Esophagus muscularis mucosa (tissue), 4 donors: ENCODE measurements at regions of chr22 and their contacts with region 1.

Region 1: GRCh38 chr22:24423519-24424000 is 3.8 kb upstream of the ADORA2A start:
- DNase-seq: no peak
- H3K4me3 ChIP-seq: peak overlapping the region; percentile 55 to 69 (median 62)
- H3K27ac ChIP-seq: peak overlapping the region; percentile 7 to 48 (median 24)
- H3K4me1 ChIP-seq: peaks cover 37 to 54% (median 44%) of the 10 kb centered on the region in 4 donors
- H3K27me3 ChIP-seq: peaks cover 0 to 34% (median 7%) of the 10 kb centered on the region in 4 donors
- CTCF ChIP-seq: peak in 2 of 3 experiments; percentile 88 to 91
- EP300 ChIP-seq: no peak
- POLR2A ChIP-seq: no peak

Region 2: DNA sequence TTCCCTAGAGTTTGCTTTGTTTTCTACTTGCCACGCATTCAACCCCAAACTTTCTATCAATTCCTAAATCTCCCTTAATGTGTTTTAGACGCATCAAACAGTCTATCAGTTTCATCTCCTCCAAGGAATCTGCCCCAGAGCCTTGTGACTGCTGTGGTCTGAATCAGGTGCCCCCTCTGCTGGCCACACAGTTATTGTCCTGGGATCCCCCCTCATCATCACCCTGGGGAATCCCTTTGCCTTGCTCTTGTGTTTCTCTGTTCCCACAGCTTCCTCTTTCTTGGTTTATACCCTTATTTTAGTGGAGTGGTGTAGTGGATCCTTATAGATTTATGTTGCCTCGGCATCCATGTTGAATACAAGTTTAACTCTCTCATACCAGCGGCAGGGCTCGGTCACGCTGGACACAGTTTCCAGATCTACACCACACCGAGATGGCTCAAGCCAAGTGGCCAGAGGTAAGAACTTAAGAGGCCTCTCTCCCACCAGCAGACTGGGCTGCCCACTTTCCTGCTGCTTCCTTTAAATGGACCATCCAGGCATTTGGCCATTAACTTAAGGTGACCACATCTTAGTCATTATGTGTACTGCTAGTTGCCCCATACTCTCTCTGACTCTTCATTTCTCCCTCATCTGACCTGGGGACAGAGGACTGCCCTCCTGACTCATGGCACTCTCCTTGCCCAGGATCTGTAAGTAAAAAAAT is 79.7 kb after region 1 on chr22:
- intact Hi-C with region 1: loop called (anchors 1 kb)
- DNase-seq: no peak
- H3K4me3 ChIP-seq: no peak overlapping the region
- H3K27ac ChIP-seq: no peak overlapping the region
- H3K4me1 ChIP-seq: peaks cover 0 to 11% (median 7%) of the 10 kb centered on the region in 4 donors
- H3K27me3 ChIP-seq: no peaks in the 10 kb centered on the region
- CTCF ChIP-seq: peak; percentile 65 to 75 (median 70)
- EP300 ChIP-seq: no peak
- POLR2A ChIP-seq: no peak